Panc1 (cell line): ENCODE measurements at regions of chr1 and their contacts with region 1.

Region 1: GRCh38 chr1:158972841-158973240 is 36.9 kb upstream of the IFI16 start:
- DNase-seq: no peak
- ATAC-seq: no peak
- H3K4me3 ChIP-seq: no peak overlapping the region
- H3K27ac ChIP-seq: no peak overlapping the region
- H3K4me1 ChIP-seq: no peaks in the 10 kb centered on the region
- H3K27me3 ChIP-seq: no peaks in the 10 kb centered on the region
- CTCF ChIP-seq: no peak; the same call in 1 of the 2 replicates

Region 2: DNA sequence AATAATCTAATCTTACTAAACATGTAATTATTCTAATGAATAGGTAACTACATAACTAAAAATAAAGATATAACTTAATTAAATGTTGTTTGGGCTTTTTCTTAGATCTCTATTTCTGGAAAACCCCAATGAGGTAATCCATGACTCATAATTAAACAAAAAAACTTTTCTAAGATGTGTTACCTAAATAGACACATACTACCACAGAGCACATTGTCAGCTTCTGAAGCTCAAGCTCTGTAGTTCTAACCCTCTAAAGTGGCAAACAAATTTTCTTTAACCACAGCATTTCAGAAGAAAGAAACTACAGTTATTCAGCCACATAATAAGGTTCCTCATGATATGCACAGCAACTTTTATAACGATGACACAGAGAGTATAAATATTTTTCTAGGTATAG is 256.5 kb before region 1 on chr1:
- CTCF ChIA-PET with region 1: interaction called, 12 read pairs
- POLR2A ChIA-PET with region 1: no interaction called
- in situ Hi-C with region 1: no loop called
- intact Hi-C with region 1: no loop called
- DNase-seq: no peak
- ATAC-seq: no peak
- H3K4me3 ChIP-seq: no peak overlapping the region
- H3K27ac ChIP-seq: no peak overlapping the region
- H3K4me1 ChIP-seq: no peaks in the 10 kb centered on the region
- H3K27me3 ChIP-seq: no peaks in the 10 kb centered on the region
- CTCF ChIP-seq: no peak

Region 3: DNA sequence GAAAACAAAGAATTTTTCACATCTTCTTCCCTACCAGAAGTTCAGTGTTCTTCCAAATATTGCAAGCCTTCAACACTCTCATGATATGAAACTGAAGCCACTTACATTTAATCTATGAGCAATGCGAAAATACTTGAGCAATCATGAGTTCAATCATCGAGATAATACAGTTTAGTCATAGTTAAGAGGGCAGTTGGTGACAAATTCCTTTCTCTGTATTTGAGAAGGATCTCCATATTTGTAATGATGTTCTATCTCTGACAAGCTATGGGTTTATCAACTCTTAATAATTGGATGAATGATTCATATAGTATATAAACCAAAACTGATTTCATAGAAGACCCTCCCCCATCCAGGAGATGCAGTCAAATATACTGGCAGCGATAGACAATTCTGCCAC is 71.2 kb before region 1 on chr1:
- CTCF ChIA-PET with region 1: no interaction called
- POLR2A ChIA-PET with region 1: no interaction called
- in situ Hi-C with region 1: no loop called
- intact Hi-C with region 1: no loop called
- DNase-seq: no peak
- ATAC-seq: no peak
- H3K4me3 ChIP-seq: no peak overlapping the region
- H3K27ac ChIP-seq: no peak overlapping the region
- H3K4me1 ChIP-seq: no peaks in the 10 kb centered on the region
- H3K27me3 ChIP-seq: no peaks in the 10 kb centered on the region
- CTCF ChIP-seq: no peak

Region 4: GRCh38 chr1:158943059-158943458 is 29.8 kb before region 1 on chr1:
- CTCF ChIA-PET with region 1: no interaction called
- POLR2A ChIA-PET with region 1: no interaction called
- in situ Hi-C with region 1: no loop called
- intact Hi-C with region 1: no loop called
- DNase-seq: no peak
- ATAC-seq: no peak
- H3K4me3 ChIP-seq: no peak overlapping the region
- H3K27ac ChIP-seq: no peak overlapping the region
- H3K4me1 ChIP-seq: no peaks in the 10 kb centered on the region
- H3K27me3 ChIP-seq: no peaks in the 10 kb centered on the region
- CTCF ChIP-seq: no peak

Region 5: GRCh38 chr1:159188375-159188788 is 215.5 kb after region 1 on chr1:
- CTCF ChIA-PET with region 1: no interaction called
- POLR2A ChIA-PET with region 1: no interaction called
- in situ Hi-C with region 1: no loop called
- intact Hi-C with region 1: no loop called
- DNase-seq: no peak
- ATAC-seq: 0 out of 2 replicates have a peak, but pooled peaks have one; percentile 63
- H3K4me3 ChIP-seq: no peak overlapping the region
- H3K27ac ChIP-seq: no peak overlapping the region
- H3K4me1 ChIP-seq: no peaks in the 10 kb centered on the region
- H3K27me3 ChIP-seq: peaks cover 21% of the 10 kb centered on the region
- CTCF ChIP-seq: no peak